Mammary epithelial cell (primary cell): ENCODE measurements at regions of chr9 and their contacts with region 1.

Region 1: DNA sequence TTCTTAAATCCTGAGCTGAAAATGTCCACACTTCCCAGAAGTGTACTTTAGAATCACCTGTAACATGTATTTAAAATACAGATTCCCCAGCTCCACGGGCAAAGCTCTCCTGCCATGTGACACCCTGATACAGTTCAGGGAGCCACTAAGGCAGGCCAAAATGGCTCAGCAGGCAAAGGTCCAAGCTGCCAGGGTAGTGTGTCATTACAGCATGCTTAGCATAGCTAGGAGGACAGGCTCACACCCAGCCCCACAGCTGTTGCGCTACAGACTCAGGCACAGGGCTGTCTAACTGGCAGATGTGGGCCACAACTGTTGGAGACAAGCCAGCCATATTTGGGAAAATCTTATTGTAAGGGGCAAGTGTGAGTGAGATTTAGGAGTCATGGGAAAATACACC is 73.0 kb downstream of the C9orf85 start:
- DNase-seq: peak; percentile 38
- H3K4me3 ChIP-seq: no peak overlapping the region
- H3K27ac ChIP-seq: no peak overlapping the region
- H3K4me1 ChIP-seq: no peaks in the 10 kb centered on the region
- H3K27me3 ChIP-seq: no peaks in the 10 kb centered on the region
- CTCF ChIP-seq: no peak

Region 2: DNA sequence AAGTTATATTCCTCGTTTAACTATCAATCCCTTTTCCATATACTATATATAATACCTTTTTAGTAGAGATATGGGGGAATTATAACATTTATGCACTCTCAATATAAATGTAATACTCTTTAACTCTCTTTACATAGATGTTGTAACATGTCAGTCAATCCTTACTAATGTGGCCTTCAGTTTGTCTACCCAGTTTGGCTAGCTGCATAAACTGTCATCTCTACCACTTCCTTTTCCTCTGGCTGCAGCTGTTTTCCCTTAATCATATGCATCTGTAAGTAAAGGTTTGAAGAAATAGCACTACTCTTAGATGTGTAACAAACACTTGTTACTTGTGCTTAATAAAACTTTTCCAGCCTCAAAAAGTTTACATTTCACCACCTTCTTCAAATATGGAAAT is 86.8 kb before region 1 on chr9:
- CTCF ChIA-PET with region 1: no interaction called
- dilution Hi-C with region 1: no loop called
- in situ Hi-C with region 1: no loop called
- intact Hi-C with region 1: no loop called
- DNase-seq: no peak
- H3K4me3 ChIP-seq: no peak overlapping the region
- H3K27ac ChIP-seq: no peak overlapping the region
- H3K4me1 ChIP-seq: peaks cover 17% of the 10 kb centered on the region
- H3K27me3 ChIP-seq: no peaks in the 10 kb centered on the region
- CTCF ChIP-seq: no peak

Region 3: GRCh38 chr9:72022841-72023240 is 38.4 kb after region 1 on chr9:
- CTCF ChIA-PET with region 1: no interaction called
- dilution Hi-C with region 1: no loop called
- in situ Hi-C with region 1: no loop called
- intact Hi-C with region 1: loop called (anchors 2 kb)
- DNase-seq: peak; percentile 89
- H3K4me3 ChIP-seq: no peak overlapping the region
- H3K27ac ChIP-seq: no peak overlapping the region
- H3K4me1 ChIP-seq: peaks cover 20% of the 10 kb centered on the region
- H3K27me3 ChIP-seq: no peaks in the 10 kb centered on the region
- CTCF ChIP-seq: no peak

Region 4: DNA sequence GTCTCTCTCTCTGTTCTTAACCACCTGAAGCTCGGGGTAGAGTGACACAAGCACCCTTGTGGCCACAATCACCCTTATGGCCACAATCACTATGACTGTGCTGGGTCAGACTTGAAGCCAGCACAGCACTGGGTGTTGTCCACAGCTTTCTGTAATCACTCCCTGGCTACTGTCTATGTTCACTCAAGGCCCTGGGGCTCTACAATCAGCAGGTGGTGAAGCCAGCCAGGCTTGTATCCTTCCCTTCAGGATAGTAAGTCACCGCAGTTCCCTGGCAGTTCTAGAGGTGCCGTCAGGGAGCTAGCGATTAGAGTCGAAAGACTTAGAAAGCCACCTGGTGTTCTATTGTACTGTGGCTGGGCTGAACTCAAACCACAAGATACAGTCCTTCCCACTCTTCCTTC is 209.1 kb after region 1 on chr9:
- CTCF ChIA-PET with region 1: no interaction called
- dilution Hi-C with region 1: no loop called
- in situ Hi-C with region 1: no loop called
- intact Hi-C with region 1: no loop called
- DNase-seq: peak; percentile 36
- H3K4me3 ChIP-seq: no peak overlapping the region
- H3K27ac ChIP-seq: no peak overlapping the region
- H3K4me1 ChIP-seq: no peaks in the 10 kb centered on the region
- H3K27me3 ChIP-seq: no peaks in the 10 kb centered on the region
- CTCF ChIP-seq: no peak

Region 5: DNA sequence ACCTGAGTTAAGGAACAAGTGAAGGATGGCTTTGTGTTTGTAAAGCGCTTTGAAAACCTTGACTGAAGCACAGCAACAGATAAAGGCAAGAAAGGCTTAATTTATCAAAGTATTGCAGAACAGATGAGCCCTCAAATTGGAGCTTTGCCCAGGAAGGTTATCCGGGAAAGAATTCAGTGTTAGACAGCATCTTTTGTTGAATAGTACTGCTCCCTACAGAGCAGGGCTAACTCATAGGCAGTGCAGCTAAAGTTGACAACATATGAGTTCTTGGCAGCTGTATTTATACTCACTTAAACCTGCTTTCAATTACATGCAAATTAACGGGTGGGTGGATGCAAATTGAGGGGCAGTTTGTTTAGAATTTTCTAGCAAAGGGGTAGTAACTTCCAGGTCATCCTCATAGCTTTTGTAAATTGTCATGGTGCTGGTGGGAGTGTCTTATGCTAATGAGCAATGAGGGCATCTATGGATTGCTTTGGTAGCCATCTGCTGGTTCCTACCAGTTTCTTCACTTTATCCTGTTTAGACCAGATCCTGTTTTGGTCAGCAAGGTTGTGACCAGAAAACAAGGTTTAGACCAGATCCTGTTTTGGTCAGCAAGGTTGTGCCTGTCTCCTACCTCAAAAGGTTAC is 270.6 kb after region 1 on chr9:
- CTCF ChIA-PET with region 1: no interaction called
- dilution Hi-C with region 1: no loop called
- in situ Hi-C with region 1: no loop called
- intact Hi-C with region 1: no loop called
- DNase-seq: no peak
- H3K4me3 ChIP-seq: no peak overlapping the region
- H3K27ac ChIP-seq: no peak overlapping the region
- H3K4me1 ChIP-seq: peaks cover 7% of the 10 kb centered on the region
- H3K27me3 ChIP-seq: no peaks in the 10 kb centered on the region
- CTCF ChIP-seq: no peak